Astrocyte of the cerebellum (primary cell): ENCODE measurements at regions of chr6 and their contacts with region 1.

Region 1: DNA sequence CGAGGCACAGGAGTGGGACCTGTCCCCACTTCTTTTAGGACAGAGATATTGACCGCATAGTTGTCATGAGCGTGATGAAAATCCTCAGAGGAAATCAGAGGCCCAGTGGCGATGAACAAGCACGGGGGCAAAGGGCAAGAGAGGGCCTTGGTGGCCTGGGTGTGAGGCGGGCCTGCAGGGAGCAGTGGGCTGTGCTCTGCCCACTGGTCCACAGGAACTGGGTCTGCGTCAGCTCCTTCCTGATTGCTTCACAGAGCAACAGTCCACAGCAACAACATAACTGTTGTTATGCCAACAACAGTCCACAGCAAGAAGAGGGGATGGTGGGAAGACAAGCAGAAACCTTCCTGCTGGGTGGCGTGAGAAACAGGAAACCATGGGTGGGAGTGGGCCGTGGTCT is 335.6 kb downstream of the ZFAND3 start:
- DNase-seq: no peak
- H3K4me3 ChIP-seq: no peak overlapping the region
- CTCF ChIP-seq: no peak

Region 2: GRCh38 chr6:36912586-36912985 is 1242.6 kb before region 1 on chr6:
- in situ Hi-C with region 1: no loop called
- DNase-seq: peak; percentile 74
- H3K4me3 ChIP-seq: no peak overlapping the region
- CTCF ChIP-seq: no peak

Region 3: DNA sequence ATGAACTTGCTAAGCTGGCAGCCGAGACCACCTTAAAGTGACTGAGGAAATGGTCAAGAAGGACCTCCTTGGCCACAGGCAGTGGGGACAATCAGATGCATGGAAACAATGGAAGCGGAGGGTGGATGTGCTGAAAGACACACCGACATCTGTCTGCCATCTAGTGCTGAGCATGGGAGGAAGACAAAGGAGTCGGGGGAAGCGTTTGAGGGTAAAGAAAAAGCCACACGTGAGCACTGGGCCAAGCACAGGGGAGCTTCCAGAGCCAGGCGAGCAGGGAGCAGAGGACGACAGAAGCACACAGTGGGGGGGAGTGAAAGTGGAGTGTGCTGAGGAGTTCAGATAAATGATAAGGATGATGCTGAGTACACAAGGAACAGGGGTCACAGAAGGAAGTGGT is 32.2 kb after region 1 on chr6:
- in situ Hi-C with region 1: loop called (anchors 5 kb)
- DNase-seq: no peak
- H3K4me3 ChIP-seq: no peak overlapping the region
- CTCF ChIP-seq: no peak

Region 4: DNA sequence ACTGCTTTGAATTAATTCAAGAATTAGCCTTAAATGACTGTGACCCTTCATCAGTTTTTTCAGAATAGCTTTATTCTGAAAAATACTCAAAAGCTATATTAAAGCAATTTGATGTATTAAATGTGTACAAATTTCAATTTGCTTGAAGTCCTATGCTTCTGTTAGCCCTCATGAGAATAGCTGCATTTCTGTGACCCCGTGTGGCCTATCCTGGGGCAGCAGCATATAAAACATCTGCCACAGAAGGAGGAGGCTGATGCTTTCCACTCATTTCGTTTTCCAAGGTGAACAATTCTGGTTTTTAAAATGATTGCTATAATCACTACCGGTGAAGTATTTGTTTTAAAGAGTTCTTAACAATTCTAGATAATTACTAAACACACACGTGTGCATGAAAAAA is 124.3 kb after region 1 on chr6:
- in situ Hi-C with region 1: loop called (anchors 10 kb)
- DNase-seq: no peak
- H3K4me3 ChIP-seq: no peak overlapping the region
- CTCF ChIP-seq: no peak